HCT116 (cell line): ENCODE measurements at regions of chr17 and their contacts with region 1.

Region 1: GRCh38 chr17:74601944-74602572 is 10.0 kb upstream of the CD300LD start:
- DNase-seq: peak; percentile 53
- ATAC-seq: peak; percentile 89
- H3K4me3 ChIP-seq: no peak overlapping the region
- H3K27ac ChIP-seq: no peak overlapping the region
- H3K4me1 ChIP-seq: peaks cover 0 to 8% of the 10 kb centered on the region in 2 experiments; a peak in 1 of 4 replicates
- H3K27me3 ChIP-seq: peaks cover 64% of the 10 kb centered on the region
- CTCF ChIP-seq: peak; percentile 76 to 95 (median 85)
- POLR2A ChIP-seq: no peak
- RAD21 ChIP-seq: peak; percentile 94

Region 2: GRCh38 chr17:74368092-74369081 is 233.7 kb before region 1 on chr17:
- CTCF ChIA-PET with region 1: interaction called, 8 read pairs
- POLR2A ChIA-PET with region 1: no interaction called
- RAD21 ChIA-PET with region 1: no interaction called
- intact Hi-C with region 1: loop called (anchors 2 kb)
- DNase-seq: peak; percentile 67
- ATAC-seq: peak; percentile 95
- H3K4me3 ChIP-seq: no peak overlapping the region
- H3K27ac ChIP-seq: no peak overlapping the region
- H3K4me1 ChIP-seq: peaks cover 2 to 13% of the 10 kb centered on the region in 2 experiments; a peak in 2 of 4 replicates
- H3K27me3 ChIP-seq: no peaks in the 10 kb centered on the region
- CTCF ChIP-seq: peak; percentile 96 to 100 (median 99)
- POLR2A ChIP-seq: no peak
- RAD21 ChIP-seq: peak; percentile 94

Region 3: DNA sequence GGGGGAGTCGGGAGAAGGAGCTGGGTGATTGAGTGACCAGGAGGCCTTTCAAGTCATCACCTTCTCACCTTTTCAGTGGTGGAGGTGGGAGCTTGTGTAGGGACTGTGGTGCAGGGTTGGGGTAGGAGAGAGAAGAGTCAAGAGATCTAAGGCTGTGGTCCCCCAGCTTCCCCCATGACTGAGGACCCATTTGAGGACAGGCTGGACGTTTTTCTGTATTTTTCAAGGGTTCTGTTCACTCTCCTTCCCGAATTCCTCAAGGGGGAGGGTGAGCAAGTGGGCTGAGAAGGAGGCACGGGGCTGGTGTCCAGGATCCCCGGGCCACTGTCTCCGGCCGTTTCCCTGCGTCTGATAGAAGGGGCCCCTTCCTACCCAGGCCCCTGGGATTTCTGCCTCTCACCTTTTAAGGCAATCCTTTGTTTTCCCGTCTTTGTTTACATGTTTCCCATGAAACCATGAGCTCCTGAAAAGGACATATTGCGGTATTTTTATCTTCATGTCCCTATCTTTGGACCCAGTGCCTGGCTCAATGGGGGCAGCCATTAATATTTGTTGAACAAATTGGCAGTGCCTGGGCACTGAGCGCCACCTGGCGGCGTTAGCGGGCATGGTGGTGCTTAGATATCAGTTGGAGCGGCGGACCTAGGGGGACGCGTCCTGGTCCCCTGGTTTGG is 144.8 kb before region 1 on chr17:
- CTCF ChIA-PET with region 1: interaction called, 4 read pairs
- POLR2A ChIA-PET with region 1: no interaction called
- RAD21 ChIA-PET with region 1: no interaction called
- intact Hi-C with region 1: loop called (anchors 1 kb)
- DNase-seq: peak; percentile 63
- ATAC-seq: peak; percentile 56
- H3K4me3 ChIP-seq: no peak overlapping the region
- H3K27ac ChIP-seq: no peak overlapping the region
- H3K4me1 ChIP-seq: peaks cover 22 to 29% of the 10 kb centered on the region in 2 experiments
- H3K27me3 ChIP-seq: no peaks in the 10 kb centered on the region
- CTCF ChIP-seq: peak; percentile 97 to 100 (median 99)
- POLR2A ChIP-seq: no peak
- RAD21 ChIP-seq: peak; percentile 100

Region 4: DNA sequence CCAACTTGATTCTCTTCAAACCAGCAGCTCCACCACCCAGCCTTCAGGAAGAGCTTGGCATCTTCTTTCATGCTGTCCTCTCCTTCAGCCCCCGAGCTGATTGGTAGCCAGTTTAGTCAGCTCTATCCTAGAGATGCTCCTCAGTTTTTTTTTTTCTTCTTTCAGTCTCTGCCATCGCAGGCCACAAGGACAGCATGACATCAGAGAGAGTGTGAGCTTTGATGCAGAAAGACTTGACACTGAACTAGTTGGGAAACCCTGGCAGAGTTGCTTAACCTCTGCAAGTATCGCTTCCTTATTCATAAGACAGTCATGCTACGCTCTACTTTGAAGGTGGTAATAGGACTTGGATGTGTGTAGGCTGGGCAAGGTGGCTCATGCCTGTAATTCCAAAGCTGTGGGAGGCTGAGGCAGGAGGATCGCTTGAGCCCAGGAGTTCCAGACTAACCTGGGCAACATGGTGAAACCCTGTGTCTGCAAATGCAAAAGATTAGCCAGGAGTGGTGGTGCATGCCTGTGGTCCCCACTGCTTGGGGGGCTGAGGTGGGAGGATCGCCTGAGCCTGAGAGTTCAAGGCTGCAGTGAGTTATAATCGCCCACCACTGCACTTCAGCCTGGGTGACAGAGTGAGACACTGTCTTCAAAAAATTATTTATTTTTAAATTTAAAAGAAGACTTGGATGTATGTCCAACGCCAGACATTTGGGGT is 73.4 kb before region 1 on chr17:
- CTCF ChIA-PET with region 1: no interaction called
- POLR2A ChIA-PET with region 1: no interaction called
- RAD21 ChIA-PET with region 1: no interaction called
- intact Hi-C with region 1: loop called (anchors 1 kb)
- DNase-seq: no peak
- ATAC-seq: no peak
- H3K4me3 ChIP-seq: no peak overlapping the region
- H3K27ac ChIP-seq: no peak overlapping the region
- H3K4me1 ChIP-seq: no peaks in the 10 kb centered on the region
- H3K27me3 ChIP-seq: peaks cover 60% of the 10 kb centered on the region
- CTCF ChIP-seq: no peak
- POLR2A ChIP-seq: no peak
- RAD21 ChIP-seq: no peak